ENCODE measurements at regions of chr2 and their contacts with region 1.

Region 1: DNA sequence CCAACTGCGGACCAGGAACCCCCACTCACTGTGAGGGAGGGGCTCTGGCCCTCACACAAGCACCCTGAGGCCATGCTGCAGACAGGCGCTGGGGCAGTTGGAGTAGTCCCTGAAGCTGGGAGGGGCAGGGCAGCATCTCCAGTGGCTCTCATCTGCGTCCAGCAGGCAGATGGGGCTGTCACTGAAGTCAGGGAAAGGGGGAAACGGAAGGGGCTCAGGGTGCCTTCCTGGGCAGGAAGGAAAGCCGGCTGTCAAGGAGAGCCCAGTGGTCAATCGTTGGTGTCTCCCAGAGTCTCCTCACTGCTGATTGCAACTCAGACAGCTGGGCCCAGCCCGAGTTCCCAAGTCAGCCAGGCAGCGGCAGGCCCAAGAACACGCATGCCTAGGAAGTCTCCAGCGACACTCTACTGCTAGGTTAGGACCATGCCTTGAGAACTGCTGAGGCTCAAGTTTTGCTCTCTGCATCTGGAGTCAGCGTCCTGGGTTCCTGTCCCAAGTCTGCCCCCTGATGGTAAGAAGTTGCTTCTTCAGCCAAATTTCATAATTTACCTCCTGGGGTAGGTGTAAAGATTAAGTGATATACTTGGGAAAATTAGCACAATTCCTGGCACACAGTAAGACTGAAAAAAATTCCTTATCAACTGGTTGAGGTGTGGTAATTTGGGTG is 27.5 kb upstream of the NMUR1 start:
- DNase-seq: peak; percentile 85
- ATAC-seq: peak; percentile 88
- H3K4me3 ChIP-seq: no peak overlapping the region
- H3K4me3 Mint-ChIP-seq: no peak overlapping the region
- H3K27ac ChIP-seq: no peak overlapping the region
- H3K27ac Mint-ChIP-seq: no peak overlapping the region
- H3K4me1 ChIP-seq: peaks cover 26 to 28% of the 10 kb centered on the region in 2 donors
- H3K4me1 Mint-ChIP-seq: peaks cover 23% of the 10 kb centered on the region
- H3K27me3 ChIP-seq: no peaks in the 10 kb centered on the region
- H3K27me3 Mint-ChIP-seq: no peaks in the 10 kb centered on the region
- CTCF ChIP-seq: peak; percentile 82

Region 2: DNA sequence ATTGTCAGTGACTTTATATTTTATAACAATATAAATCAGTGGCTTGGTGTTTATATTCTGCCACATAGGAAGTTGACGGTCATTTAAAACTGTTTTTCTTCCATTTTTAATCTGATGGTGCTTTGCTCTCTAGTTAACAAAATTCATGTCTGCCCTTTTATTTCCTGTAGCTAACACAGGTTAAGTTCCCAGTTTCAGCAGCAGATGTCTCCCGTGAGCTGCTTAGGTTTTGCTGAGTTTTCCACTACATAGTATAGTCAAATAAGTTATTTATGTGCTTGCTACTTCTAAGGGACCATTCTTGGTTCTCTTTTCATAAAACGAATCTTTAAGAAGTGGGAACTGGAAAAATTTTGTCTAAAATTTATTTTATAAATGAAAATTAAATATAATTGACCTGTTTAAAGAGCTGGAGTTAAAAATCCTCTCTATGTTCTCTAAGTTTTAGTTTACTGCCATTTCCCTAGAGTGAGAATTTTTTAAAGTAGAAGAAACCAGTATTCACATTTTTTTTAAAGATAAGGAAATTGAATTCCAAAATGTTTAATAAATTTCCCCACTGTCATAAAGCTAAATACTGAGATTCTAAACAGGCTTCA is 453.5 kb before region 1 on chr2:
- CTCF ChIA-PET with region 1: no interaction called
- POLR2A ChIA-PET with region 1: no interaction called
- intact Hi-C with region 1: loop called (anchors 10 kb)
- DNase-seq: peak; percentile 73
- ATAC-seq: peak; percentile 69
- H3K4me3 ChIP-seq: no peak overlapping the region
- H3K4me3 Mint-ChIP-seq: no peak overlapping the region
- H3K27ac ChIP-seq: no peak overlapping the region
- H3K27ac Mint-ChIP-seq: no peak overlapping the region
- H3K4me1 ChIP-seq: no peaks in the 10 kb centered on the region
- H3K4me1 Mint-ChIP-seq: no peaks in the 10 kb centered on the region
- H3K27me3 ChIP-seq: no peaks in the 10 kb centered on the region
- H3K27me3 Mint-ChIP-seq: no peaks in the 10 kb centered on the region
- CTCF ChIP-seq: peak; percentile 87

Region 3: GRCh38 chr2:231482806-231483391 is 74.8 kb before region 1 on chr2:
- CTCF ChIA-PET with region 1: interaction called, 54 read pairs
- POLR2A ChIA-PET with region 1: interaction called, 5 read pairs
- intact Hi-C with region 1: no loop called
- DNase-seq: peak; percentile 82
- ATAC-seq: peak; percentile 85
- H3K4me3 ChIP-seq: peak overlapping the region in 4 of 5 experiments; percentile 58 to 65 (median 59)
- H3K4me3 Mint-ChIP-seq: peak overlapping the region; percentile 83
- H3K27ac ChIP-seq: peak overlapping the region; percentile 71 to 75
- H3K27ac Mint-ChIP-seq: peak overlapping the region; percentile 86
- H3K4me1 ChIP-seq: peaks cover 0 to 19% of the 10 kb centered on the region in 2 donors
- H3K4me1 Mint-ChIP-seq: peaks cover 7% of the 10 kb centered on the region
- H3K27me3 ChIP-seq: no peaks in the 10 kb centered on the region
- H3K27me3 Mint-ChIP-seq: no peaks in the 10 kb centered on the region
- CTCF ChIP-seq: peak; percentile 91

Region 4: DNA sequence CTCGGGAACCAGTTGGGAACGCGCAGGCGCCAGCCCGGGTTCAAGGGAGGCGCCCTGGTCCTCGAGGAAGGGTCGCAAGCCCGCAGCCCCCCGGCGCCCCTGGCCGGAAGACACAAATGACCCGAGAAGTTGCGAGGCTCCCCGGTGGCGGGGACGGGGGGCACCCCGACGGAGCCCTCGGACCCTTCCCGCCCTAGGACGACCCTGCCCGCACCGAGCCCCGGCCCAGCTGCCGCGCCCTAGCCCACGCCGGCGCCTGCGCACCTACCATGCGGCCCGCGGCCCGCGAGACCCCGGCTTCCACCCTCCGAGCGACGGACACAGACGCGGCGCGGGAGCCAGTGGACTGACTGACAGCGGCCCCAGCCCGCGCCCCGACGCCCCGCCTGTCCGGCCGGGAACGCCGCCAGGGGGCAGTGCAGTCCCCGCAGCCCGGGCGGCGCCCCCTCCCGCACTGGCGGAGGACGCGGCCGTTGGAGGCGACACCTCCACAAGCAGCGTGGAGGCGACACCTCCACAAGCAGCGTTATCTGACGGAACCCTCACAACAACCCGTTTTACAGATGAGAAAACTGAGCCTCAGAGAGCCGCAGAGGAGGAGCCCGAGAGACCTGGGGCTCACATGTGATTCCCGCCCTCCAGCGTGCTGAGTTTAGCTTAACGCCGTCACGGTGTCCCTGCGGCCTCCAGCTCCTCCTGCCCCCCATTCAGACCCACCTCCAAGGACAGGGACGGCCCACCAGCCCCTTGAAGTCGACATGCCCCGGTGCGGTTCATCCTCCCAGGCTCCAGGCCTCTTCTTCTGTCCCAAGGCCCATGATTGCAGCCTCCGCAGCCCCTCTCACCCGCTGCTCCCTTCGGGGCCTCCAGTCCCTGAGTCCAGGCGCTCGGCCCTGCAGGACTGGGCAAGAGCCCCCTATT is 27.4 kb before region 1 on chr2 and contains the start of gene NMUR1:
- CTCF ChIA-PET with region 1: interaction called, 76 read pairs
- POLR2A ChIA-PET with region 1: no interaction called
- intact Hi-C with region 1: loop called (anchors 1 kb)
- DNase-seq: peak; percentile 81
- ATAC-seq: peak; percentile 96
- H3K4me3 ChIP-seq: peak within 1 kb of the TSS in 2 of 5 experiments; percentile 31 to 46
- H3K4me3 Mint-ChIP-seq: peak within 1 kb of the TSS; percentile 49
- H3K27ac ChIP-seq: no peak within 1 kb of the TSS
- H3K27ac Mint-ChIP-seq: no peak within 1 kb of the TSS
- H3K4me1 ChIP-seq: peaks cover 11 to 14% of the 10 kb centered on the region in 2 donors
- H3K4me1 Mint-ChIP-seq: peaks cover 9% of the 10 kb centered on the region
- H3K27me3 ChIP-seq: peaks cover 0 to 28% (median 8%) of the 10 kb centered on the region in 4 experiments
- H3K27me3 Mint-ChIP-seq: peaks cover 28% of the 10 kb centered on the region
- CTCF ChIP-seq: peak; percentile 91
- total RNA-seq, gene NMUR1: 0.10 TPM in 1 of 2 replicates, not detected in the other

Region 5: GRCh38 chr2:231545105-231545902 is 12.4 kb before region 1 on chr2:
- CTCF ChIA-PET with region 1: interaction called, 8 read pairs
- POLR2A ChIA-PET with region 1: interaction called, 3 read pairs
- intact Hi-C with region 1: loop called (anchors 2 kb)
- DNase-seq: peak; percentile 65
- ATAC-seq: peak; percentile 91
- H3K4me3 ChIP-seq: peak overlapping the region in 4 of 5 experiments; percentile 22 to 37 (median 29)
- H3K4me3 Mint-ChIP-seq: peak overlapping the region; percentile 74
- H3K27ac ChIP-seq: peak overlapping the region; percentile 54 to 62
- H3K27ac Mint-ChIP-seq: peak overlapping the region; percentile 68
- H3K4me1 ChIP-seq: peaks cover 27 to 45% of the 10 kb centered on the region in 2 donors
- H3K4me1 Mint-ChIP-seq: peaks cover 34% of the 10 kb centered on the region
- H3K27me3 ChIP-seq: no peaks in the 10 kb centered on the region
- H3K27me3 Mint-ChIP-seq: no peaks in the 10 kb centered on the region
- CTCF ChIP-seq: no peak

Region 6: GRCh38 chr2:231642631-231643494 is 85.2 kb after region 1 on chr2:
- CTCF ChIA-PET with region 1: no interaction called
- POLR2A ChIA-PET with region 1: no interaction called
- intact Hi-C with region 1: no loop called
- DNase-seq: peak; percentile 58
- ATAC-seq: peak; percentile 74
- H3K4me3 ChIP-seq: peak overlapping the region in 4 of 5 experiments; percentile 22 to 55 (median 42)
- H3K4me3 Mint-ChIP-seq: peak overlapping the region; percentile 83
- H3K27ac ChIP-seq: peak overlapping the region in 1 of 2 donors; percentile 45
- H3K27ac Mint-ChIP-seq: peak overlapping the region; percentile 83
- H3K4me1 ChIP-seq: peaks cover 14 to 20% of the 10 kb centered on the region in 2 donors
- H3K4me1 Mint-ChIP-seq: peaks cover 16% of the 10 kb centered on the region
- H3K27me3 ChIP-seq: no peaks in the 10 kb centered on the region
- H3K27me3 Mint-ChIP-seq: no peaks in the 10 kb centered on the region
- CTCF ChIP-seq: no peak